ENCODE measurements at regions of chr12 and their contacts with region 1.

Region 1: DNA sequence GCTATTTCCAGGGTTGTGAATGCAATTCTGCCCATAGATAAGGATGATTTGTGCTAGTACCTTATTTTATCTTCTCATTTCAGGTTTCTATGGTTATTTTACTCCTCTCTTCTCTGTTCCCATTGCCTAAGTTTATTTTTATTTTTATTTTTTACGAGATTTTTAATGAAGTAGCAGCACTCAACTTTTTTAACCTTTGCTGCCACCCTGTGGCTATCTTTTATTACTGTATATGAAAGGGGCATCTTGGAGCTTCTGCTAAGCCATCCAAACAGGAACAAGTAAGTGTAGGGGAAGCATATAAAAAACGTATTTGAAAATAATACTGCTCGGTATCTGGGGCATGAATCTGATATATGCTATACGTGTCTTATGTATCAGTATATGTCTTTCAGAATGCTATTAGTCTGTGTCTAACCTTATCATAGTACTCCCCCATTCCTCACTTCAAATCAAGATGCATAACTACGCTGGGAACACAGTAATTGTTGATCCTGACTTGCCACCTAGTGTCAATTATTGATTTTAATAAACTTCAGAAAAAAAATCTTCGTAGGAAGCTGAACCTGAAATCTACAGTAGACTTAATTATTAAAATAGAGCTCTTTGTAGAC is 60.3 kb downstream of the KLRG1 start:
- DNase-seq: peak in 4 of 9 experiments; percentile 30 to 76 (median 56)
- ATAC-seq: peak; percentile 83
- H3K4me3 ChIP-seq: no peak overlapping the region
- H3K4me3 Mint-ChIP-seq: no peak overlapping the region
- H3K27ac ChIP-seq: no peak overlapping the region
- H3K27ac Mint-ChIP-seq: no peak overlapping the region
- H3K4me1 ChIP-seq: peaks cover 5% of the 10 kb centered on the region
- H3K4me1 Mint-ChIP-seq: peaks cover 29% of the 10 kb centered on the region
- H3K27me3 ChIP-seq: no peaks in the 10 kb centered on the region
- H3K27me3 Mint-ChIP-seq: no peaks in the 10 kb centered on the region
- CTCF ChIP-seq: peak; percentile 85

Region 2: GRCh38 chr12:8544295-8544694 is 505.3 kb before region 1 on chr12:
- CTCF ChIA-PET with region 1: interaction called, 26 read pairs
- POLR2A ChIA-PET with region 1: no interaction called
- intact Hi-C with region 1: loop called (anchors 1 to 2 kb)
- DNase-seq: peak; percentile 46 to 84 (median 75)
- ATAC-seq: peak; percentile 81
- H3K4me3 ChIP-seq: no peak overlapping the region
- H3K4me3 Mint-ChIP-seq: peak overlapping the region; percentile 13
- H3K27ac ChIP-seq: no peak overlapping the region
- H3K27ac Mint-ChIP-seq: no peak overlapping the region
- H3K4me1 ChIP-seq: no peaks in the 10 kb centered on the region
- H3K4me1 Mint-ChIP-seq: peaks cover 9% of the 10 kb centered on the region
- H3K27me3 ChIP-seq: no peaks in the 10 kb centered on the region
- H3K27me3 Mint-ChIP-seq: peaks cover 14% of the 10 kb centered on the region
- CTCF ChIP-seq: peak; percentile 95

Region 3: GRCh38 chr12:8780389-8780788 is 269.2 kb before region 1 on chr12:
- CTCF ChIA-PET with region 1: interaction called, 7 read pairs
- POLR2A ChIA-PET with region 1: no interaction called
- intact Hi-C with region 1: loop called in 1 of 2 experiments (anchors 5 kb)
- DNase-seq: peak in 2 of 9 experiments; percentile 16 to 29
- ATAC-seq: no peak
- H3K4me3 ChIP-seq: no peak overlapping the region
- H3K4me3 Mint-ChIP-seq: no peak overlapping the region
- H3K27ac ChIP-seq: no peak overlapping the region
- H3K27ac Mint-ChIP-seq: no peak overlapping the region
- H3K4me1 ChIP-seq: no peaks in the 10 kb centered on the region
- H3K4me1 Mint-ChIP-seq: no peaks in the 10 kb centered on the region
- H3K27me3 ChIP-seq: no peaks in the 10 kb centered on the region
- H3K27me3 Mint-ChIP-seq: no peaks in the 10 kb centered on the region
- CTCF ChIP-seq: no peak

Region 4: GRCh38 chr12:8897081-8897480 is 152.5 kb before region 1 on chr12:
- CTCF ChIA-PET with region 1: interaction called, 22 read pairs
- POLR2A ChIA-PET with region 1: no interaction called
- intact Hi-C with region 1: no loop called
- DNase-seq: no peak
- ATAC-seq: no peak
- H3K4me3 ChIP-seq: no peak overlapping the region
- H3K4me3 Mint-ChIP-seq: no peak overlapping the region
- H3K27ac ChIP-seq: no peak overlapping the region
- H3K27ac Mint-ChIP-seq: no peak overlapping the region
- H3K4me1 ChIP-seq: no peaks in the 10 kb centered on the region
- H3K4me1 Mint-ChIP-seq: no peaks in the 10 kb centered on the region
- H3K27me3 ChIP-seq: no peaks in the 10 kb centered on the region
- H3K27me3 Mint-ChIP-seq: peaks cover 3% of the 10 kb centered on the region
- CTCF ChIP-seq: no peak

Region 5: DNA sequence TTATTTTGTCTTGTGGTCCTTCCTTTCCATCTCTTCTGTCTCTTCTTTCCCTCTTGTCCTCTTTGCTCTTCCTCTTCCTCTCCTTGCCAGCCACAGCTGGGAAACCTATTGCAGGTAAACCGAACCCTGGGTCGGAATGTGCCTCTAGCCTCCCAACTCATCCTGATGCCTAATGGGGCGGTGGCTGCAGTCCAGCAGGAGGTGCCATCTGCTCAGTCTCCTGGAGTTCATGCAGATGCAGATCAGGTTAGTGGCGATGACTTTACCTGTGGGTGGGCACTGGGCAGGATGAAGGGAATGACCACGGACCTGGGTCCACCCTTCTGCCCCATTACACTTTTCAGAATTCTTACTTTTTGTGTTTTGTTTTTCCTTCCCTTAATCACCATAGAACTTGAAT is 127.1 kb before region 1 on chr12:
- CTCF ChIA-PET with region 1: interaction called, 22 read pairs
- POLR2A ChIA-PET with region 1: no interaction called
- intact Hi-C with region 1: no loop called
- DNase-seq: peak in 1 of 9 experiments; percentile 9
- ATAC-seq: no peak
- H3K4me3 ChIP-seq: no peak overlapping the region
- H3K4me3 Mint-ChIP-seq: no peak overlapping the region
- H3K27ac ChIP-seq: no peak overlapping the region
- H3K27ac Mint-ChIP-seq: no peak overlapping the region
- H3K4me1 ChIP-seq: no peaks in the 10 kb centered on the region
- H3K4me1 Mint-ChIP-seq: no peaks in the 10 kb centered on the region
- H3K27me3 ChIP-seq: no peaks in the 10 kb centered on the region
- H3K27me3 Mint-ChIP-seq: no peaks in the 10 kb centered on the region
- CTCF ChIP-seq: no peak

Region 6: GRCh38 chr12:9039397-9039977 is 10.1 kb before region 1 on chr12:
- CTCF ChIA-PET with region 1: interaction called, 26 read pairs
- POLR2A ChIA-PET with region 1: interaction called, 3 read pairs
- intact Hi-C with region 1: loop called in 1 of 2 experiments (anchors 1 kb)
- DNase-seq: peak in 2 of 9 experiments; percentile 68 to 79
- ATAC-seq: peak; percentile 93
- H3K4me3 ChIP-seq: no peak overlapping the region
- H3K4me3 Mint-ChIP-seq: no peak overlapping the region
- H3K27ac ChIP-seq: peak overlapping the region in 1 of 2 experiments; percentile 51
- H3K27ac Mint-ChIP-seq: peak overlapping the region; percentile 21
- H3K4me1 ChIP-seq: peaks cover 36% of the 10 kb centered on the region
- H3K4me1 Mint-ChIP-seq: peaks cover 51% of the 10 kb centered on the region
- H3K27me3 ChIP-seq: no peaks in the 10 kb centered on the region
- H3K27me3 Mint-ChIP-seq: no peaks in the 10 kb centered on the region
- CTCF ChIP-seq: peak; percentile 96

Region 7: DNA sequence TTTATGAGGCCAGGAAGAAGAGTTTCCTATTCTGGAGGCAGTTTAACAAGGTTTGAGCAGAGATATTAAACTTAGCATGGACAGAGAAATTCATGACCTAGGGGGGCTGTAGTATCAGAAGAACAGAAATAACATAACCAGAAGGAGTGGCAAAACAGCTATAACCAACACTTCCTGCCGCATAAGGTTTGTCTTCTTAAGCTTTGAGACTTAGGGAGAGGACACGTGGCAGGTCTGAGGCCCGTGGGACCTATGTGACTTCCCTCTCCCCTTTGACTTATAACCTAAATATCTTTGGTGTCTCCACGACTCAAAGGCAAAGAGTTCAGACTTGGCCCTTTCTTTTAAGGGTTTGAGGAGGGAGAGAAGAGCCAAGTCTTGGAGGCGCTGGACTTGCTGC is 277.7 kb after region 1 on chr12:
- CTCF ChIA-PET with region 1: no interaction called
- POLR2A ChIA-PET with region 1: no interaction called
- intact Hi-C with region 1: no loop called
- DNase-seq: peak in 1 of 9 experiments; percentile 39
- ATAC-seq: no peak
- H3K4me3 ChIP-seq: no peak overlapping the region
- H3K4me3 Mint-ChIP-seq: no peak overlapping the region
- H3K27ac ChIP-seq: no peak overlapping the region
- H3K27ac Mint-ChIP-seq: no peak overlapping the region
- H3K4me1 ChIP-seq: peaks cover 17% of the 10 kb centered on the region
- H3K4me1 Mint-ChIP-seq: peaks cover 23% of the 10 kb centered on the region
- H3K27me3 ChIP-seq: no peaks in the 10 kb centered on the region
- H3K27me3 Mint-ChIP-seq: no peaks in the 10 kb centered on the region
- CTCF ChIP-seq: no peak

Region 8: GRCh38 chr12:10082117-10082874 is 1032.7 kb after region 1 on chr12:
- CTCF ChIA-PET with region 1: no interaction called
- POLR2A ChIA-PET with region 1: no interaction called
- intact Hi-C with region 1: no loop called
- DNase-seq: no peak
- ATAC-seq: no peak
- H3K4me3 ChIP-seq: no peak overlapping the region
- H3K4me3 Mint-ChIP-seq: no peak overlapping the region
- H3K27ac ChIP-seq: no peak overlapping the region
- H3K27ac Mint-ChIP-seq: no peak overlapping the region
- H3K4me1 ChIP-seq: no peaks in the 10 kb centered on the region
- H3K4me1 Mint-ChIP-seq: no peaks in the 10 kb centered on the region
- H3K27me3 ChIP-seq: no peaks in the 10 kb centered on the region
- H3K27me3 Mint-ChIP-seq: peaks cover 9% of the 10 kb centered on the region
- CTCF ChIP-seq: no peak